GM12878 (cell line): ENCODE measurements at regions of chr10 and their contacts with region 1.

Region 1: GRCh38 chr10:68301790-68302502 is 29.9 kb upstream of the HNRNPH3 start:
- DNase-seq: peak; percentile 41
- ATAC-seq: peak; percentile 84
- H3K4me3 ChIP-seq: no peak overlapping the region
- H3K27ac ChIP-seq: no peak overlapping the region
- H3K4me1 ChIP-seq: peaks cover 16% of the 10 kb centered on the region
- H3K27me3 ChIP-seq: no peaks in the 10 kb centered on the region
- CTCF ChIP-seq: peak; percentile 52 to 64 (median 56); a peak in 5 of 6 replicates
- EP300 ChIP-seq: no peak
- POLR2A ChIP-seq: no peak
- RAD21 ChIP-seq: peak; percentile 70

Region 2: GRCh38 chr10:67788025-67788886 is 513.7 kb before region 1 on chr10:
- CTCF ChIA-PET with region 1: interaction called, 113 read pairs
- POLR2A ChIA-PET with region 1: no interaction called
- RAD21 ChIA-PET with region 1: interaction called, 34 read pairs
- SMC1A ChIA-PET with region 1: interaction called, 36 read pairs
- in situ Hi-C with region 1: no loop called
- intact Hi-C with region 1: loop called (anchors 1 kb)
- DNase-seq: no peak
- ATAC-seq: peak; percentile 84
- H3K4me3 ChIP-seq: no peak overlapping the region
- H3K27ac ChIP-seq: no peak overlapping the region
- H3K4me1 ChIP-seq: peaks cover 20% of the 10 kb centered on the region
- H3K27me3 ChIP-seq: no peaks in the 10 kb centered on the region
- CTCF ChIP-seq: peak; percentile 73 to 85 (median 83)
- EP300 ChIP-seq: no peak
- POLR2A ChIP-seq: no peak
- RAD21 ChIP-seq: peak; percentile 84

Region 3: DNA sequence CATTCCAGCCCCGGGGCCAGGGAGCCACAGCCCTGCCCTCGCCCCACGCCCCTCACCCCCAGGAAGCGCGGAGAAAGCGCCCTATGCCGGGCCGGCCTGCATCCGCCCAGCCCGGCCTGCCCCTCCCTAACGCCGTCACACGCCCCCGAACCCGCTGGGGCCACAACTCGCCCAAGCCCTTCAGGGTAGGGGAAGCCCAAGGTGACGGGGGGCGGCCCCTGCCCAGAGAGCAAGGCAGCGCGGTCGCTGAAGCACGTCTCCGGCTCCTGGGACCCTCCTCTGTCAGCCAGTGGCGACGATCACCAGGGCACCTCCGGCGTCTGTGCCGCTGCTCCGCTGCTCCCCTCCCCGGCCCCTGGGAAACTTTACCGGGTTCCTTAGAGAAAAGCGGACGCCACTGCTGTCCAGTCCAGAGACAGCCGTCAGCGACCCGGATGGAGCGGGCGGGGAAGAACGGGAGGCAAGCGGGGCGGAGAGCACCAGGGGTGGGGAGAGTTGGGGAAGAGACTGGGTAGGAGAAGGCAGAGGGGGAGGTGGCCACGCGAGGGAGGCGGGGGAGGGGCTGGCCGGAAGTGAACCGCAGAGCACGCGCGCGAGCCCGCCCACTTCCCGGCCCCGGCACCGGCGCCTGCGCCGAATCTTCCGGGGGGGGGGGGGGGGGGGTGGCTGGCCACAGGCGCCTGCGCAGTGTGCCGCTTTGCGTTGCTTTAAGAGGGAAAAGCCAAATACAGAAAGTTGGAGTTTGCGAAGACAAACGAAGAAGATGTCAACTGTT is 227.0 kb before region 1 on chr10 and contains the start of gene HERC4:
- CTCF ChIA-PET with region 1: interaction called, 6 read pairs
- POLR2A ChIA-PET with region 1: no interaction called
- RAD21 ChIA-PET with region 1: interaction called, 4 read pairs
- SMC1A ChIA-PET with region 1: no interaction called
- in situ Hi-C with region 1: no loop called
- intact Hi-C with region 1: loop called (anchors 5 kb)
- DNase-seq: peak; percentile 64
- ATAC-seq: peak; percentile 93
- H3K4me3 ChIP-seq: peak within 1 kb of the TSS; percentile 89
- H3K27ac ChIP-seq: peak within 1 kb of the TSS; percentile 92
- H3K4me1 ChIP-seq: 0 out of 2 replicates have a peak, but pooled peaks cover 3% of the 10 kb centered on the region
- H3K27me3 ChIP-seq: no peaks in the 10 kb centered on the region
- CTCF ChIP-seq: no peak
- EP300 ChIP-seq: no peak
- POLR2A ChIP-seq: peak; percentile 97
- RAD21 ChIP-seq: no peak
- polyA plus RNA-seq, gene HERC4: 9.7 to 11.5 TPM

Region 4: DNA sequence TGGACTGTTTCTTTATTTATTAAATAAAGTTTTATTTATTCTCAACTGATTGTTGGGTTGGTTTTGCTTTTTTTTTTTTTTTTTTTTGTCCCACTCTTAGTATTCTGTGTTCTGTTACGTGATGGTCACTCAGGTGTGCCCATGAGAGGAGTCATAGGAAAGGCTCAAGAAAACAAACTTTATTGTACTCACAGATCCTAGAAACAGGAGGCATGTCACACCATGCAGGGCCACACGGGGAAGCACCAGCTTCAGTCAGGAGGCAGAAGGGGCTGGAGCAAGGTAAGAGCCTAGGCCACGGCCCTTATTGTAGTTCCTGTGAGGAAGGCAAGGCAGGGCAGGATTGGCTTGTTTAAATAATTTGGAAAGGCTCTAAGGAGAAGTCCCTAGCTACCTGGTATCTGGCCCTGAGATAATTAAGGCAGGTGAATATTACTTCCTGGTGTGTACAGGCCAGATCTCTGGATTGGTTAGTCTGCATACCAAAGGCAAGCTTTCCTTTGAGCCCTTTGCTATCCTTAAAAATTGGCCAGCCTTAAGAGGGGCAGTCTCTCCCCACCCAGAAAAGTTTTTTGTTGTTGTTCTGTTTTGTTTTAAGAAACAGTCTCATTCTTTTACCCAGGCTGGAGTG is 78.3 kb before region 1 on chr10:
- CTCF ChIA-PET with region 1: interaction called, 5 read pairs
- POLR2A ChIA-PET with region 1: no interaction called
- RAD21 ChIA-PET with region 1: interaction called, 4 read pairs
- SMC1A ChIA-PET with region 1: interaction called, 9 read pairs
- in situ Hi-C with region 1: loop called (anchors 5 kb)
- intact Hi-C with region 1: no loop called
- DNase-seq: no peak
- ATAC-seq: peak; percentile 71
- H3K4me3 ChIP-seq: no peak overlapping the region
- H3K27ac ChIP-seq: no peak overlapping the region
- H3K4me1 ChIP-seq: no peaks in the 10 kb centered on the region
- H3K27me3 ChIP-seq: no peaks in the 10 kb centered on the region
- CTCF ChIP-seq: no peak
- EP300 ChIP-seq: no peak
- POLR2A ChIP-seq: no peak
- RAD21 ChIP-seq: peak; percentile 28; the same call in 1 of the 2 replicates

Region 5: DNA sequence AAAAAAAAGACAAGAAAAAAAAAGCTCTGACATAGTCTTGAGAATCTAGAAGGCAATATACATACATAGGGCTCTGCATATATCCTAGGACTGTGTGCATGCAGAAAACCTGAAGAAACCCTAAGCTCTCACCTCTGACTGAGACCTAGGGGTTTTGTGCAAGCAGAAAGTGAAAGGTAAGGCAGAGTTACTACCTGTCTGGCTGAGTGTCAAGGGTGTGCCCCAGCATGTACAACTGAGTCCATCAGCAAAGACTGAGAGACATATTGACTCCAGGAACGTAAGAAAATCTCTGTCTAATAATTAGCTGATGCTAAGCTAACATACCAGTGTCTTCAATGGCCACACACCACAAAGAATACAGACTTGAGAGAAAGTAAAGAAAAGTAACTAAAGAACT is 13.6 kb after region 1 on chr10:
- CTCF ChIA-PET with region 1: interaction called, 35 read pairs
- POLR2A ChIA-PET with region 1: interaction called, 3 read pairs
- RAD21 ChIA-PET with region 1: interaction called, 5 read pairs
- SMC1A ChIA-PET with region 1: interaction called, 8 read pairs
- in situ Hi-C with region 1: no loop called
- intact Hi-C with region 1: no loop called
- DNase-seq: no peak
- ATAC-seq: no peak
- H3K4me3 ChIP-seq: no peak overlapping the region
- H3K27ac ChIP-seq: no peak overlapping the region; the same call in 1 of the 2 replicates
- H3K4me1 ChIP-seq: no peaks in the 10 kb centered on the region
- H3K27me3 ChIP-seq: no peaks in the 10 kb centered on the region
- CTCF ChIP-seq: no peak
- EP300 ChIP-seq: no peak
- POLR2A ChIP-seq: no peak
- RAD21 ChIP-seq: no peak

Region 6: DNA sequence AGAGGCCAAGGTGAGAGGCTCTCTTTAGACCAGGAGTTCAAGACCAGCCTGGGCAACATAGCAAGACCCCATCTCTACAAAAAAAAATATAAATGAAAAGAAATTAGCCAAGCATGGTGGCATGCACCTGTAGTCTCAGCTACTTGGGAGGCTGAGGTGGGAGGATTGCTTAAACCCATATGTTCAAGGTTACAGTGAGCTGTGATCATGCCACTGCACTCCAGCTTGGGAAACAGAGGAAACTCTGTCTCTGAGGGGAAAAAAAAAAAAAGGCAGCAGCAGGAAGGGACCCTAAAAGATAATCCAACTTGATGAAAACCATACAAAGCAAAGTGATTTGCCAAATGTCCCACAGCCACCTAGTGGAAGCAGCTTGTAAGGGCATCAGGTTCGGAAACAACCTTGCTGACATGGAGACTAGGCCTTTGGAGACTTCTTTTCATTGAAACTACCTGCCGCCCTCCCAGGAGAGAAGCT is 46.4 kb after region 1 on chr10:
- CTCF ChIA-PET with region 1: interaction called, 16 read pairs
- POLR2A ChIA-PET with region 1: interaction called, 4 read pairs
- RAD21 ChIA-PET with region 1: interaction called, 3 read pairs
- SMC1A ChIA-PET with region 1: interaction called, 5 read pairs
- in situ Hi-C with region 1: no loop called
- intact Hi-C with region 1: no loop called
- DNase-seq: no peak
- ATAC-seq: peak; percentile 82
- H3K4me3 ChIP-seq: no peak overlapping the region
- H3K27ac ChIP-seq: no peak overlapping the region
- H3K4me1 ChIP-seq: no peaks in the 10 kb centered on the region
- H3K27me3 ChIP-seq: no peaks in the 10 kb centered on the region
- CTCF ChIP-seq: peak; percentile 63 to 83 (median 81)
- EP300 ChIP-seq: no peak
- POLR2A ChIP-seq: no peak
- RAD21 ChIP-seq: peak; percentile 54

Region 7: GRCh38 chr10:68973975-68974374 is 672.0 kb after region 1 on chr10:
- CTCF ChIA-PET with region 1: no interaction called
- POLR2A ChIA-PET with region 1: no interaction called
- RAD21 ChIA-PET with region 1: no interaction called
- SMC1A ChIA-PET with region 1: no interaction called
- in situ Hi-C with region 1: no loop called
- intact Hi-C with region 1: no loop called
- DNase-seq: no peak
- ATAC-seq: no peak
- H3K4me3 ChIP-seq: no peak overlapping the region
- H3K27ac ChIP-seq: no peak overlapping the region
- H3K4me1 ChIP-seq: no peaks in the 10 kb centered on the region
- H3K27me3 ChIP-seq: no peaks in the 10 kb centered on the region
- CTCF ChIP-seq: no peak
- EP300 ChIP-seq: no peak
- POLR2A ChIP-seq: no peak; the same call in 1 of the 2 replicates
- RAD21 ChIP-seq: no peak